GM13976 (cell line): ENCODE measurements at regions of chr12 and their contacts with region 1.

Region 1: GRCh38 chr12:117874842-117875434 is 93.9 kb downstream of the KSR2 start:
- DNase-seq: peak; percentile 75
- CTCF ChIP-seq: peak; percentile 76

Region 2: GRCh38 chr12:117968826-117969659 is 94.1 kb after region 1 on chr12 and contains the start of gene KSR2:
- in situ Hi-C with region 1: no loop called
- DNase-seq: peak; percentile 87
- CTCF ChIP-seq: no peak

Region 3: DNA sequence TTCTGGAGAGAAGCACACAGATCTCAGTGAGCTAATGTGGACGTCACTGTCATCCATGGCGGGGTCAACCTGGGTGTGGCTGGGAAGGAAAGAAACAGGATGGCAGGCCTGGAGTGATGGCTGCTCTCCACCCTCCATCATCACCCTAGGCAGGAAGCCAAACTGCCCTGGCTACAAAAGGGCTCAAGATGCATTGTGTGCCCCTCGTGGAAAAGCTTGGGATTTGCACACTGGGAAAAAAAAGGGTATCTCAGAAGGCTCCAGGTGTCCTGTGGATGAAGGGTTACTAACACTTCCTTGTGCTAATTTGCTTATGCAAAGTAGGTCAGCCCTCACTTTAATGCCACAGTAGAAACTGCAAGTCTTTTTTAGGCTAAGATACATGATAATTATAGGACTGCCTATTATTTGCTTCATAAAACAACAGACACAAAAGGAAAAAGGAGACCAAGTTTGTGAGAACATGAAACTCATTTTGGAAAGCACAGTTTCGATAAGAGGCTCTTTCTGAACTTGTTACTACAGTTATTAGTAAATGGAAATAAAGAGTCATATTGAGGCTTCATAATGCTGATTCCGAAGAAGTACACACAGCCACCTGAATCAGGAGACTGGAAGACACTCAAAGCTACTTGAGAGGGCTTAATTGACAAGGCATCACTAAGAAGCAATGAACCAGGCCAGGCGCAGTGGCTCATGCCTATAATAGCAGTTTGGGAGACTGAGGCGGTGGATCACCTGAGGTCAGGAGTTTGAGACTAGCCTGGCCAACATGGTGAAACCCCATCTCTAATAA is 160.5 kb after region 1 on chr12:
- in situ Hi-C with region 1: loop called (anchors 25 kb)
- DNase-seq: peak; percentile 75
- CTCF ChIP-seq: no peak

Region 4: DNA sequence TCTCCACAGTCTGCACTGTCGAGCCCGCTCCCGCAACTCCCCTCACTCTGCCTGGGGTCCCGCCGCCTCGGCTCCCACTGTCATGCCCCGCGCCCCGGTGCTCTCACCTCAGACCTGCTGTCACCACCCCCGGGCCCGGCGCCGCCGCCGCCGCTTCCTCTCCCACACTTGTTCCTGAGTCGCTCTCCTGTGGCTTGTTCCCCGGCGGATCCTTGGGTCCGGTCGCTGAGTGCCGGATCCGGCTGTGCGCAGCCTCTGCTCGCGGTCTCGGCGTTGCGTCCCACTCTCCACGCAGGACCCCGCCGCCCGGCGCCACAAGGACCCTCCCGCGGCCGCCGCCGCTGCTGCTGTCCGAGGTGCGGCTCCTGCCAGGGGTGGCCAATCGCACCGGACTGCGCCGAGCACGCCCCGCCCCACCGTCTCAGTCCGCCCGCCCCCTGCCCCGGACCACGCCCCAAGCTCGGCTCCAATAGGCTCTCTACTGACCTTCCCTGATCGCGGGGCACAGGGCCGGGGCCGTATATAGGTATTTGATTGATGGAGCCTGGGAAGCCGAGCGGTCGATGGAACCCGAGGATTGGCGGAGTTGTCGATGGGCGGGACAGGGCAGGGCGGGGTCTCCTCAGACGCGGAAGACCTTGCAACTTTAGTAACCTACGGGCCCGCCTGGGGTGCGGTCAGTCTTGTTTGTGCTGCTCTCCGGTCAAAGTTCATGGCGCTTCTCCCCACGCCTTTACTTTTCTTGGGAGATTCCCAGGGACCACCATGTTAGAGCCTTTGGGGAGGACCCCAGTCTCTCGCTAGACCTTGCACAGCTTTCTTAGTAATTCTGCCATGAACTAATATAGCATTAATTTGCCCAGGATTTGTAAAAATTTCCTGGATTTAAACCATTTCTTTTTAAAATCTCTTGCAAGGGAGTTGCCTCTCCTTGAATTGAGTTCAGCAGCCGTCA is 497.9 kb after region 1 on chr12 and contains the start of gene TAOK3:
- in situ Hi-C with region 1: loop called (anchors 10 kb)
- DNase-seq: peak; percentile 97
- CTCF ChIP-seq: no peak